Activated naive CD8-positive, alpha-beta T cell treated with anti-CD3 and anti-CD28 coated beads, Interleukin-2, amount 10 ng/mL, durations not matched to agents 7 days and 5 days (primary cell): ENCODE measurements at regions of chr15 and their contacts with region 1.

Region 1: GRCh38 chr15:92808978-92809879 is 90.9 kb upstream of the CHD2 start:
- DNase-seq: peak; percentile 99
- ATAC-seq: peak; percentile 85
- H3K4me3 Mint-ChIP-seq: peak overlapping the region; percentile 92
- H3K27ac Mint-ChIP-seq: peak overlapping the region; percentile 85
- H3K4me1 Mint-ChIP-seq: peaks cover 30% of the 10 kb centered on the region
- H3K27me3 Mint-ChIP-seq: no peaks in the 10 kb centered on the region

Region 2: GRCh38 chr15:92749216-92749615 is 60.0 kb before region 1 on chr15:
- POLR2A ChIA-PET with region 1: no interaction called
- DNase-seq: no peak
- ATAC-seq: no peak
- H3K4me3 Mint-ChIP-seq: no peak overlapping the region
- H3K27ac Mint-ChIP-seq: no peak overlapping the region
- H3K4me1 Mint-ChIP-seq: no peaks in the 10 kb centered on the region
- H3K27me3 Mint-ChIP-seq: peaks cover 1% of the 10 kb centered on the region

Region 3: DNA sequence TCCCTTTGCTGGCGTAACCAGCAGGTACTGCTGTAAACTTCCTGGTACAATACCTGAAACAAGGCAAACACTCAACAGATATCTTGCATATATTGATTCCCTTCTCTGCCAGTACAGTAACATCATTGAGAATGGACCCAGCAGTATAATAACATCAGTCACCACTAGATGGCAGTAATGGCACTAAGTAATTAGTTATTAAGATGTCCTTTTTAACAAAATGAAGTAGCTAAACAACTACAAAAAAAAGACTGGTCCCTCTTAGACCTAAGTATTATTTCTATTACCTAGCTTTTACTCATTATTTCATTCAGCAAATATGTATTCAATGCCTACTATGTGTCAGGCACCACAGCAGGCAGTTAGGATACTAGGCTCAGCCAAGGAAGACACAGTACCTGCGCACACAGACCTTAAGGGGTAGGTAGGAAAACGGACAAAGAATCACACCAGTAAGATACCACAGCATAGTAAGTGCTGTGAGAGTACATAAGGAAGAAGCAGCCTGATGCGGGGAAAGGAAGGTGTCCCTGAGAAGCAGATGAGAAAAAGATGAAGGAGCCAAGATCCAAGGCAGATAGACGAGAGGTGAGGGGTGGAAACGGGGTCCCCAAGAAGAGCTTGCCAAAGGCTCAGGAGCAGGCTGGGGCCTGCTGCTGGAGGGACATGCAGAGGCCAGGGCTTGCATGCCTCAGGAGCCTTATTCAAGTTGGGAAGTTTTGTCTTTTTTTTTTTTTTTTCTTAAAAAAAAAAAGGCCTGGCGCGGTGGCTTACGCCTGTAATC is 11.9 kb before region 1 on chr15:
- POLR2A ChIA-PET with region 1: interaction called, 13 read pairs
- DNase-seq: no peak
- ATAC-seq: peak; percentile 82
- H3K4me3 Mint-ChIP-seq: no peak overlapping the region
- H3K27ac Mint-ChIP-seq: peak overlapping the region; percentile 51
- H3K4me1 Mint-ChIP-seq: peaks cover 8% of the 10 kb centered on the region
- H3K27me3 Mint-ChIP-seq: no peaks in the 10 kb centered on the region

Region 4: DNA sequence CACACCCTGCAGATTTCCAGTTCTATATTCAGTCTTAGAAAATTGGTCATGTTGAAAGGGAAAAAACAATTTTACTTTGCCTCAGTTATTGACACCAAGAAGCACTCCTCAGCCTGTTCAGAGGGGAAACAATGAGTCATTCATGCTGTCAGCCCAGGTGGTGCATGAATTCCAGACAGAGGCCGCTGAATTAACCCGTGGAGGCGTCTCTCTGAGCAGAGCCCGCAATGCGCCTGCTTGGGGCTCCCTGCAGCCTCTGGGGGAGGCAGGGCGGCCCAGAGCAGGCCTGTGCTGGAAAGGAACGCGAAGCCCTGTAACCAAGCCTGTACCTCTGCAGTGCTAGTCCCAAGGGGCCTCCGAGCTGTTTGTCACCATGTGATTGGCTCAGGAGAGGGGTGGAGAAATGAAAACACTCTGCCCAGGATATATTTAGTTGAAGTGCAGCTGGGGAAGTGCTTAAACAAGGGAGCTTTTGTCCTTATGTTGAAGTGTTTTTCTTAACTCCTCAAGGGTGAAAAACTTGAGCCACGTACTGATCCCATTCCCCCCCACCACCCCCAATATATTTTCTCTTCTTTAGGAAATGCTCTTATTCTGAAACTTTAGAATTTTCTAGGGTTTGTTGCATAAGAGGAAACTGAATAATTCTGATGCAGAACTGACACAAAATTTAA is 22.6 kb after region 1 on chr15:
- POLR2A ChIA-PET with region 1: interaction called, 65 read pairs
- DNase-seq: peak; percentile 85
- ATAC-seq: peak; percentile 99
- H3K4me3 Mint-ChIP-seq: peak overlapping the region; percentile 67
- H3K27ac Mint-ChIP-seq: peak overlapping the region; percentile 92
- H3K4me1 Mint-ChIP-seq: peaks cover 34% of the 10 kb centered on the region
- H3K27me3 Mint-ChIP-seq: no peaks in the 10 kb centered on the region

Region 5: GRCh38 chr15:92881802-92882696 is 72.8 kb after region 1 on chr15:
- POLR2A ChIA-PET with region 1: interaction called, 498 read pairs
- DNase-seq: peak; percentile 97
- ATAC-seq: peak; percentile 91
- H3K4me3 Mint-ChIP-seq: peak overlapping the region; percentile 90
- H3K27ac Mint-ChIP-seq: peak overlapping the region; percentile 95
- H3K4me1 Mint-ChIP-seq: peaks cover 53% of the 10 kb centered on the region
- H3K27me3 Mint-ChIP-seq: no peaks in the 10 kb centered on the region

Region 6: DNA sequence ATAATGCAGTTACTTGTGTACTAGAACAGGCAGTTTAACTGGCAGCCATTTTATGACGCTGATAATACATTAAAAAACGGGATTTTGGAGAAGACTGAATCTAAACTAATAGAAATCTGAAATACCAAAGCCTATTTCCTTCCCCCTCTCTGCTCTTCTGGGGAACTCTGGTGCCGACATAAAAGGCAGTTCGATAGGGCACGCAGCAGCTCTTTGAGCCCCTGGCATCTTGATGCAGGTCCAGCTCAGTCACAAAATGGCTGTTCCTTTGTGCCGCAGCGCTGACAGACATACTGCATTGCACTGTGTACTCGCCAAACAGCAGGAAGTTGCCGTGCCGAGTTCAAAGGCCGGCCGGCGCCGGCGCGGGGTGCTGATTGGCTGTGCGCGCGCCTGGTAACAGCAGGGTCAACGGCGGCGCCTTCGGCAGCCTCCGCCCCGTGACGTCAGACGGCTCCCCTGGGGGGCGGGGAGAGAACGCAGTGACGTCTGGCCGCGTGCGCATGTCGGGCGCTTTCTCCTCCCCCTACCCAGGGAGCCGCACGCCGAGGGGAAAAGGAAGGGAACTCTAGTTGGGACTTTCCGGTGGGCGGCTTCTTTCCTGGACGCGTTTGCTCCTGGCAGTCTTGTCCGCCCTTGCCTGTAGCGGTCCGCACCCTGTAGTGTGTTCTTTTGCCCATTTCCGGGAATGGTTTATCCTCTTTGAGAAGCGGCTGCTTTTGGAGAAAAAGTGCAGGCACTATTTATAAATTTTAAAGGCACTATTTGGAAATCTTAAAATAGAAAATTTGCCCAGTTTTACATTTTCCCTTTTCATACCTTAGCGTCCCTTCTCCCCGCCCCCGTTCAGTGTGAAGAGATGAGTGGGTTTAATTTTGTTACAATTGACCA is 95.0 kb after region 1 on chr15:
- POLR2A ChIA-PET with region 1: interaction called, 229 read pairs
- DNase-seq: peak; percentile 100
- ATAC-seq: peak; percentile 88
- H3K4me3 Mint-ChIP-seq: peak overlapping the region; percentile 99
- H3K27ac Mint-ChIP-seq: peak overlapping the region; percentile 100
- H3K4me1 Mint-ChIP-seq: peaks cover 52% of the 10 kb centered on the region
- H3K27me3 Mint-ChIP-seq: no peaks in the 10 kb centered on the region